Activated T-helper 2 cell treated with anti-CD3 and anti-CD28 coated beads, Interferon-gamma antibody, Interleukin-2, Interleukin-4, amounts not matched to agents 10 μg/mL and 5 μg/mL and 100 μg/mL, durations not matched to agents 14 hours and 24 hours and 36 hours (primary cell): ENCODE measurements at regions of chr1 and their contacts with region 1.

Region 1: GRCh38 chr1:186899577-186899976 is 70.8 kb downstream of the PLA2G4A start:
- DNase-seq: no peak
- H3K4me3 Mint-ChIP-seq: no peak overlapping the region
- H3K27ac Mint-ChIP-seq: peak overlapping the region; percentile 85
- H3K4me1 Mint-ChIP-seq: peaks cover 51% of the 10 kb centered on the region
- H3K27me3 Mint-ChIP-seq: no peaks in the 10 kb centered on the region

Region 2: DNA sequence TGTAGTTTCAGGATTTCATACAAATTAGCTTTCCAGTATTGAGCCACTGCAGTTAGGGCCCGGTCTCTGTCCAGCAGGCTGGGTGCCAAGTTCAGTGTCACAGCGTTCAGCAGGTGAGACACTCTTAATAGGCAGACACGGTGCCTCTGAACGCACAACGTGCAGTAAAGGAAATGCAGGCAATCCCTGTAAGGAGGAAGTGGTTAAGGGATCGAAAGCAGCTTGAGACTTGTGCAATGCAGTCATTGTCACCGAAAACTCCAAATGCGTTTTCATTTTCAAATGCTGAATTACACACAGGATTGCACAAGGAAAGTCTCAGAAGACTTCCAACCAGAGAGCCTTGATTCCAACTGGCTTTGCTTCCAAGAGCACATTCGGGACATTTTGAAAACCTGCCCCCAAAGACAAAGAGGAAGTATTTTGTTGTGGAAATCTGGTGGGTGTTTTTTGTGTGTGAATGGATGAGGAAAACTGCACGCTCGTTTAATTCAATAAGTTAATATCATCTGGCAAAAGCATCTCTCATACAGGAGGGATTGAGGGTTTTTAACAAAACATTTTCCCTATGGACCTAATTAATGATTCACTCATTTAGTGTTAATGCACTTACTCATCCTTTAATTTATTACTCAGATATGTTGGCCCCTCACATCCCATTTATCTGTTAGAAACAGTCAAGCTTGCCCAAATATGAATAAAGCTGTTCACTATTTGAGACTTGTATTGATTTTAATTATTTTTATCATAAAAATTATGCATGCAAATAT is 281.0 kb before region 1 on chr1:
- intact Hi-C with region 1: loop called (anchors 5 kb)
- DNase-seq: peak; percentile 45
- H3K4me3 Mint-ChIP-seq: peak overlapping the region; percentile 66
- H3K27ac Mint-ChIP-seq: peak overlapping the region; percentile 15
- H3K4me1 Mint-ChIP-seq: peaks cover 45% of the 10 kb centered on the region
- H3K27me3 Mint-ChIP-seq: peaks cover 9% of the 10 kb centered on the region

Region 3: DNA sequence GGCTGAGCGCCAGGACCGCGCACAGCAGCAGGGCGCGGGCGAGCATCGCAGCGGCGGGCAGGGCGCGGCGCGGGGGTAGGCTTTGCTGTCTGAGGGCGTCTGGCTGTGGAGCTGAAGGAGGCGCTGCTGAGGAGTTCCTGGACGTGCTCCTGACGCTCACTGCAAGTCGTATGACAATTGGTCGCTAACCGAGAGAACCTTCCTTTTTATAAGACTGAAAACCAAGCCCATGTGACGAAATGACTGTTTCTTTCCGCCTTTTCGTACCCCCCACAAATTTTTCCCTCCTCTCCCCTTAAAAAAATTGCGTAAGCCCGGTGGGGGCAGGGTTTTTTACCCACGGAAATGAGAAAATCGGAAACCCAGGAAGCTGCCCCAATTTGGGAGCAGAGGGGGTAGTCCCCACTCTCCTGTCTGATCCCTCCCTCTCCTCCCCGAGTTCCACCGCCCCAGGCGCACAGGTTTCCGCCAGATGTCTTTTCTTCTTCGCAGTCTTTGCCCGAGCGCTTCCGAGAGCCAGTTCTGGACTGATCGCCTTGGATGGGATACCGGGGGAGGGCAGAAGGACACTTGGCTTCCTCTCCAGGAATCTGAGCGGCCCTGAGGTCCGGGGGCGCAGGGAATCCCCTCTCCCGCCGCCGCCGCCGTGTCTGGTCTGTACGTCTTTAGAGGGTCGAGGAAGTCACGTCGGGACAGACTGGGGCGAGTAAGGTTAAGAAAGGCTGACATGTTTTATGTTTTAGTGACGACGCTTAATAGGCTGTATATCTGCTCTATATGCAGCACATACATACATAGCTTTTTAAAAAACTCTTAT is 219.1 kb before region 1 on chr1 and contains the start of gene PTGS2:
- intact Hi-C with region 1: loop called (anchors 2 kb)
- DNase-seq: peak; percentile 62
- H3K4me3 Mint-ChIP-seq: peak within 1 kb of the TSS; percentile 87
- H3K27ac Mint-ChIP-seq: peak within 1 kb of the TSS; percentile 83
- H3K4me1 Mint-ChIP-seq: peaks cover 18% of the 10 kb centered on the region
- H3K27me3 Mint-ChIP-seq: peaks cover 49% of the 10 kb centered on the region
- total RNA-seq, gene PTGS2: 109 and 112 TPM in 2 replicates

Region 4: DNA sequence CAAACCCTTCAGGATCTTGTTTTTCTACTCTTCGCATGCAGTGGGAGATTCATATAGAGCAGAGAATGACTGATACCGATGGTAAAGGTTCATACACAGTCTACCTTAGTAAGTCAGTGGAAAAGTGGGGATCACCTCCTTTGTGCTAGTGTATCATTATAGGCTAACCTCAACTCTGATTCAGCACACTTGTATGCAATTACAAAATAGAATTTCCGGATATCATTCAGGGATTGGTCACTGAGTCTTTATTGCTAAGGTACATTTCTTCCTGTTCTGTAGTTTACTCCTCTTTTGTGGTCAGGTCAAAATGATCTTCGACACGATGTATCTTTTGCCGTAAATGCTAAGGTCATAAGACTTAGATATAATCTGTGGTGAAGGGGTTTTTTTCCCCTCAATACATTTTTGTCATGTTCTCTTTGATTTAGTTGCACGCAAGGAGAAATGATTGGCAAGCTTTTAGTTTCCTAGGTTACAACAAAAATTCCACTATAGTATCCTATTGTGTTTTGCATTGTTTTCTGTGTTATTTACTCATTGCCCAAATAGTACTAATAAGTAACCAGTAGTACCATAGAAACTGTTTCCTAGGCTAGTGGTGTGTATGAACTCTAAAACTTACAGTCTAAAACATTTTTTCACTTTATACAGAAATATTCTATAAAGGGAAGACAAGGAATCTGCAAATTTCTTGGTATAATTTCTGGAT is 106.6 kb before region 1 on chr1:
- intact Hi-C with region 1: loop called (anchors 1 kb)
- DNase-seq: no peak
- H3K4me3 Mint-ChIP-seq: no peak overlapping the region
- H3K27ac Mint-ChIP-seq: peak overlapping the region; percentile 56
- H3K4me1 Mint-ChIP-seq: peaks cover 20% of the 10 kb centered on the region
- H3K27me3 Mint-ChIP-seq: peaks cover 9% of the 10 kb centered on the region

Region 5: GRCh38 chr1:186865253-186865652 is 34.3 kb before region 1 on chr1:
- intact Hi-C with region 1: loop called (anchors 1 kb)
- DNase-seq: no peak
- H3K4me3 Mint-ChIP-seq: no peak overlapping the region
- H3K27ac Mint-ChIP-seq: peak overlapping the region; percentile 90
- H3K4me1 Mint-ChIP-seq: peaks cover 35% of the 10 kb centered on the region
- H3K27me3 Mint-ChIP-seq: no peaks in the 10 kb centered on the region

Region 6: DNA sequence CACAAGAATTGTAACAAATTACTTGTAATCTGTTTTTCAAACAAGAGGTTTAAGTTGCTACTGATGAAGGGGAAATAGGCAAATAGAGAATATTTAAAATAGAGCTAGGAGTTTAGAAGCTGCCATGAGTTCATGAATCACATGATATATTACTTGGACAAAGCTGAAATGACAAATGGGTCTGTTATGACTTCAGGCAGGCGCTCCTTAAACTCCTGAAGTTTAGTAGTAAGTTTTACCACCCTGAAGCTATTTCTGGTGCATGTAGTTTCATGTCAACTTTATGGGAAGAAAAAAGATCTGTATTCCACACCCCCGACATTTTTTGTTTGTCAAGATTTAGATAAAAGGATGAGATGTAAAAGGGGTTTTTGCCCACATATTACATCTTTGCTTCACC is 12.4 kb before region 1 on chr1:
- intact Hi-C with region 1: loop called (anchors 1 kb)
- DNase-seq: no peak
- H3K4me3 Mint-ChIP-seq: no peak overlapping the region
- H3K27ac Mint-ChIP-seq: peak overlapping the region; percentile 78
- H3K4me1 Mint-ChIP-seq: peaks cover 22% of the 10 kb centered on the region
- H3K27me3 Mint-ChIP-seq: no peaks in the 10 kb centered on the region